HepG2 (cell line): ENCODE measurements at regions of chr1 and their contacts with region 1.

Region 1: GRCh38 chr1:152440635-152441471 is 26.8 kb upstream of the CRNN start:
- DNase-seq: peak; percentile 54
- ATAC-seq: peak; percentile 99
- H3K4me3 ChIP-seq: no peak overlapping the region
- H3K27ac ChIP-seq: no peak overlapping the region
- H3K4me1 ChIP-seq: no peaks in the 10 kb centered on the region
- H3K27me3 ChIP-seq: peaks cover 0 to 4% of the 10 kb centered on the region in 2 experiments; a peak in 2 of 5 replicates
- CTCF ChIP-seq: peak; percentile 88
- EP300 ChIP-seq: no peak
- POLR2A ChIP-seq: no peak
- RAD21 ChIP-seq: peak; percentile 64

Region 2: DNA sequence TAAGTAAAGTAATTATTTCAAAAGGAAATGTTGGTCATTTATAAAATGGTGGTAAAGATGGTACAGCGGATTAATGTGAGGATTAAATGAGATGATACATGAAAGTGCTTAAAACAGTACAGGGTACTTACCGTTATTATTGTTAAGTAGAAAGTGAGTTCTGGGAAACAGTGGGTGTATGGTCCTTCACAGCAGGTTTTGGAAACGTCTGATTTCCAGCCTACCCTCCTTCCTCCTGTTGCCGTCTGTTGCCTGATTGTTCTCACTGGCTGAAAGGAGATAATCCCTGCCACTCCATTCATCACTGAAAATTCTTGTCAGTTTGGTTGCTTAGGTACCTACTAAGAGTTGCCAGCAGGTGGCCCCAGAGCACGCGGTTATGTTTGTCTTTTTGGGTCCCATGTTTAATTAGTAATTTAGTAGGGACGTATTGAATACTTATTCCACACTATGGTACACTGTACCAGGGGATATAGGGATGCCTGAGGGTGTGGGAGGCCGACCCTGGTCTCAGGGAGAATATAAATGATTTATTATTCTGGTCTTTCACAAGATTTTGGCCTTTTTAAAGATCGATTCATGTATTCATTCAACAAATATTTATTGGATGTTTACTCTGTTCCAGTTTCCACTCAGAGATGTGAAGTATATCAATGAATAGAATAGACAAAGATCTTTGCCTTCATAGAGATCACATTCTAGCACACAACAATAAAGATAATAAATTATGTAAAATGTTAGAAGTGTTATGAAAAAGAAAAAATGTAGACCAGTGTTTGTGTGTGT is 251.0 kb before region 1 on chr1:
- CTCF ChIA-PET with region 1: interaction called, 4 read pairs
- POLR2A ChIA-PET with region 1: no interaction called
- in situ Hi-C with region 1: loop called (anchors 10 kb)
- intact Hi-C with region 1: no loop called
- DNase-seq: peak; percentile 31
- ATAC-seq: peak; percentile 68
- H3K4me3 ChIP-seq: no peak overlapping the region
- H3K27ac ChIP-seq: no peak overlapping the region
- H3K4me1 ChIP-seq: no peaks in the 10 kb centered on the region
- H3K27me3 ChIP-seq: no peaks in the 10 kb centered on the region; a peak in 1 of 5 replicates
- CTCF ChIP-seq: peak; percentile 66
- EP300 ChIP-seq: no peak
- POLR2A ChIP-seq: no peak
- RAD21 ChIP-seq: no peak

Region 3: DNA sequence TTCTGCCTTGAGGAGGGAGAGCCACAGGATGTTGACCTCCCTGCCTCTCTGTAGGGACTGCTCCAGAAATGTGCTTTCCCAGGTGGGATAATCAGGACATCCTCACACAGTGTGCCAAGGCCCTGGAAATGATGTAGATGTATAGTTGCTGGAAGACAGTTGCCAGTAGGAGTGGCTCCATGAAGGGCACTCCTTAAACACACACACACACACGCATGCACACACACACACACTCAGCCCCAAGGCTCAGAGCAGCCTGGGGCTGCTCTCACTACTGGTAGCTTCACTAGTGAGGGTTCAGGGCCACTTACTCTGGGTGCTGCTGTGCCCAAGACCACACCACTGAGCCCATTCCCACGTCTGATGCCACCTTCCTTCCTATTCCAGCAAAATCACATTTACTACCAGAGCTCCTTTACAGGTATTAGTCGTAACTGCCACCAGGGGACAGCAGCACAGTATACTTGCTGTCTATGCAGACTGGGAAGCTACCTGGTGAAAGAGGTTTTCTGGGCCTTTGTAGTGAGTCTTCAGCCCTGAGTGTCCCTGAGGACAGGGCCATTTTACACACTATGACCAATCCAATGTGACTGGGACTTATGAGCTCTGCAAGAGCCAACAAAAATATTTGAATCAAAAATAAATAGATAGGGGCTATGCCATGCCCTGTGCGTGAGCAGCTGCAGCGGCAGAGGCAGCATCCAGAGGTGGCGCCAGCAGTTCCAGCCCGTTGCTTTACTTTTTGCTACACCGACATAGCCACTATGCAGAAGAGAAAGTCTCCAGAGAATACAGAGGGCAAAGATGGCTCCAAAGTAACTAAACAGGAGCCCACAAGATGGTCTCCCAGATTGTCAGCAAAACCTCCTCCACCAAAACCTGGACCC is 41.8 kb before region 1 on chr1:
- CTCF ChIA-PET with region 1: interaction called, 12 read pairs
- POLR2A ChIA-PET with region 1: no interaction called
- in situ Hi-C with region 1: no loop called
- intact Hi-C with region 1: loop called (anchors 1 kb)
- DNase-seq: peak; percentile 25
- ATAC-seq: peak; percentile 91
- H3K4me3 ChIP-seq: no peak overlapping the region
- H3K27ac ChIP-seq: no peak overlapping the region
- H3K4me1 ChIP-seq: no peaks in the 10 kb centered on the region
- H3K27me3 ChIP-seq: no peaks in the 10 kb centered on the region
- CTCF ChIP-seq: peak; percentile 55
- EP300 ChIP-seq: no peak
- POLR2A ChIP-seq: no peak
- RAD21 ChIP-seq: no peak